HEK293 (cell line): ENCODE measurements at regions of chr1 and their contacts with region 1.

Region 1: DNA sequence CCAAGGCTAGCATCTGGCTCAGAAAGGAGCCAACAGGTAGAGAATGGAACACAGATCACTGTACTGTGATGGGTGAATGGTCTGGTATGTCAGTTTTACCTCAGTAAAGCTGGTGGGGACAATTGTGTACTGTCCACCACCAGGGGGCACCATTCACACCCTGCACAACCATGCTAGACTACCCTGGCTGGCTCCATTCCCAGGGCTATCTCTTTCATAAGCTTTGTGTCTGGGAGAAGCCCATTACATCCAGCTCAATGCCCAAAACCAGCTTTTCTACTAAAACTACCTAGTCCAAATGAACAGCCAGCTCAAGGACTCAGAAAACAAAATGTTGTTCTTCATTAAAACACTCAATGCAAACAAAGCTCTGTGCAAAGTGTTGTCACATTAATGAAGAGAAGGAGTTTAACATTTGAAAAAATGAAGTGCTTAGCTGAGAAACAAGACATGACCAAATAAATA is 62.0 kb upstream of the RASAL2 start:
- H3K4me3 ChIP-seq: no peak overlapping the region
- H3K27ac ChIP-seq: no peak overlapping the region
- H3K4me1 ChIP-seq: no peaks in the 10 kb centered on the region
- CTCF ChIP-seq: 0 out of 2 replicates have a peak, but pooled peaks have one; percentile 35

Region 2: GRCh38 chr1:177858332-177858821 is 173.5 kb before region 1 on chr1:
- CTCF ChIA-PET with region 1: no interaction called
- POLR2A ChIA-PET with region 1: no interaction called
- H3K4me3 ChIP-seq: no peak overlapping the region
- H3K27ac ChIP-seq: no peak overlapping the region
- H3K4me1 ChIP-seq: no peaks in the 10 kb centered on the region
- CTCF ChIP-seq: no peak

Region 3: DNA sequence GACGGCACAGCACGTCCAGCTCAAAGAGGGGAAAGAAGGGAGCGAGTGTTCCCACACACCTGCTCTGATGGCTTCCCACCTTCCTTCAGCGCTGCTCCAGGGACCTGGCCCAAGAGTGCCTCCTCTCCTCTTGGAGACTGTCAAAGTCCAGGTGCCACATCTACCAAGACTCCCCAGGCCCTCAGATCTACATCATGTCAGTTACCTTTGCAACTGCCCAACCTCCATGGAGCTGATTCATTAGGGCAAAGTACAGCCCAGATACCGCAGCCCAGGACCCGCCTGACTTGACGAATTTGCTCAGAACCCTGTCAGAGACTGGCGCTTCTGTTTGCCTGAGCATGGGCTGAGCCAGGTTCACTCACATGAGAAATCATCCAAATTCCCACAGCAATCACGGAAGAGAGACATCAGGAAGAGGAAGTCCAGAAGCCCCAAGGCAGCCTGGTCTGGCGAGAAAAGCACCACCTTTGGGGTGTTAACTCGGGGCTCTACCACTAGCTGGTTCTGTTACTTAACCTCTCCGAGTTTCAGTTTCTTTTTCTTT is 62.0 kb before region 1 on chr1 and contains the start of gene SEC16B:
- CTCF ChIA-PET with region 1: no interaction called
- POLR2A ChIA-PET with region 1: no interaction called
- H3K4me3 ChIP-seq: no peak within 1 kb of the TSS
- H3K27ac ChIP-seq: no peak within 1 kb of the TSS
- H3K4me1 ChIP-seq: no peaks in the 10 kb centered on the region
- CTCF ChIP-seq: no peak

Region 4: DNA sequence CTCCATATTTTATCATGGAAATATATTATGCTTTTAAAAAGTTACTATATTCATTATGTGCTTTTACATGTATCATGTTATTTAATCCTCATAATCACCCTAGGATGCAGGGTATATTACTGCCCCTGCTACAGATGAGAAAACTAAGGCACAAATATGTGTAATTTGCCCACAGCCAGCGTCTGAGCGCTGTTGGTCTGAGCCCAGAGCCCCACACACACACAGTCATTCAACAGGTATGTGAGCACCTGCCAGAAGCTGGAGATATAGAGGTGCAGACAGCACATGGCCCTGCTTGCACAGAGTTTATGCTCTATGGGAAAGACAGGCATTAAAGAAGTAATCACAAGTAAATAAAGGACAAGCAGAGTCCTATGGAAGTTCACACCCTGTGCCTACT is 12.3 kb before region 1 on chr1:
- CTCF ChIA-PET with region 1: interaction called, 12 read pairs
- POLR2A ChIA-PET with region 1: no interaction called
- H3K4me3 ChIP-seq: no peak overlapping the region
- H3K27ac ChIP-seq: no peak overlapping the region
- H3K4me1 ChIP-seq: no peaks in the 10 kb centered on the region
- CTCF ChIP-seq: no peak

Region 5: GRCh38 chr1:178052650-178053461 is 21.0 kb after region 1 on chr1:
- CTCF ChIA-PET with region 1: interaction called, 26 read pairs
- POLR2A ChIA-PET with region 1: interaction called, 4 read pairs
- H3K4me3 ChIP-seq: no peak overlapping the region
- H3K27ac ChIP-seq: no peak overlapping the region; the same call in 1 of the 2 replicates
- H3K4me1 ChIP-seq: no peaks in the 10 kb centered on the region
- CTCF ChIP-seq: no peak

Region 6: DNA sequence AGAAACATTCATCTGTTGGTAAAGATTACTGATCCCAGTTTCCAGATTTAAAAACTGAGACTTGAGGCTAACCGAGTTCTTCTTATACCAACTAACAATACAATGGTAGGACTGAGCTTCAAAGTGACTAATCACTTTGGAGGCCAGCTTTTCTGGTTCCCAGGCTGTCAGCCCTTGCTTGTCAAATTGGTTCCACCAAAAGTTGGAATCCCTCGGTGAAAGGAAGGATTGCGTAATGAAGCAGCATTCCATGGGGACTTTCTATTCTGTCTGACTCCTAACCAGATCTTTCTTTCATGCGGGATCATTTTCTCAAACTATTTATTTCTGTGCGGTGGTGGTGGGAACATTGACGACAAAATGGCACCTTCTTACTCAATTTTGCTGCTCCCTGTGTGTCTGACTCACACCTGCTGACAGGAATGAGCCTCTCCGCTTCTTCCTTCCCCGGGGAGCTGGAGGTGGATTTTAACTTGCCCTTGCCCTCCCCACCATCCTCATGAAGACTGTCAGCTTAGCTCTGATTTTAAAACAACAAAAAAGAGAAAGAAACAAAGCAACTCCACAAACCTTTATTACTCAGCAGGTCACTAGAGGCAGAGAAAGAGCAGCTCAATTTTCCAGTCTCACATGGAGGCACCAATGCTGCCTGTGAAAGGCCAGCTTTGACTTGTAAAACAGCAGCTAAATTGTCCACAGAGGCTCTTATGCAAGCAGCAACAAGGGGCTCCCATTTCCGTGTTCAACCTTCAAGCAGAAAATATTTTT is 29.1 kb after region 1 on chr1:
- CTCF ChIA-PET with region 1: interaction called, 12 read pairs
- POLR2A ChIA-PET with region 1: interaction called, 4 read pairs
- H3K4me3 ChIP-seq: no peak overlapping the region
- H3K27ac ChIP-seq: no peak overlapping the region
- H3K4me1 ChIP-seq: no peaks in the 10 kb centered on the region
- CTCF ChIP-seq: no peak

Region 7: DNA sequence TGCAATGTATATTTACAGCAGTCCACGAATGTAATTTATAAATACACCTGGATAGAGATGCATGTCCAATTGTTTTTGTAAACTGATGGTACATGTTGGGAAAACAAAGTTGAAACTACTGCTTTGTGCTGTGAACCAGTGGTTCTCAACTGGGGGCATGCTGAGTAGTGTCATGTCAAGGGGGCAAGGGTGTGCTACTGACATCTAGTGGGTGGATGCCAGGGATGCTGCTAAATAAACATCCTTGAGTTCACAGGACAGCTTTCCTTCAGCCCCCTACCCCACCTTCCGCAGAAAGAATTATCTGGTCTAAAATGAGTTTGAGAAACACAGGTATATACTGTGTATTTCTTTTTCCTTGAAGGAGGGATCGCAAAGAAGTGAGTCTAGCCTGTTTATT is 157.9 kb after region 1 on chr1:
- CTCF ChIA-PET with region 1: interaction called, 69 read pairs
- POLR2A ChIA-PET with region 1: no interaction called
- H3K4me3 ChIP-seq: no peak overlapping the region
- H3K27ac ChIP-seq: no peak overlapping the region
- H3K4me1 ChIP-seq: peaks cover 3% of the 10 kb centered on the region; the same call in 1 of the 2 replicates
- CTCF ChIP-seq: no peak

Region 8: DNA sequence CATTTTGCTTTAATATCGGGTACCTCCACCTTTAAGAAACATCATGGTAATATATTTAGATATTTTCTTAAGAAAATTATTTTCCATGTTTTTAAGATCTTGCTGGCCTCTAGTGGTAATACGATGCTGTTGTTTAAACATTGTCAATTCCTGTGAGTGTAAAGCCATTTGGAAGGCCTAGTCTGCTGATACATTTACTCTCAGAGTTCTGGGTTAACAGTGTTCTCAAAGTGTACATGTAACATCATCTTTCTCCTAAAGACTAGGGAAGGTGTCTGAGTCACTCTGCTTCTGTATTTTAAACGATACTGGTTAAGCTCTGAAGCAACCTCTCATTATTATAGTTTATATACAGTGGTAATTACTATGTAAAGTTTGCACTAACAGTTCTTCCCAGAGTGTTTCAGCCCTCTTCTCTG is 251.1 kb after region 1 on chr1:
- CTCF ChIA-PET with region 1: interaction called, 18 read pairs
- POLR2A ChIA-PET with region 1: no interaction called
- H3K4me3 ChIP-seq: no peak overlapping the region
- H3K27ac ChIP-seq: no peak overlapping the region
- H3K4me1 ChIP-seq: no peaks in the 10 kb centered on the region
- CTCF ChIP-seq: no peak

Region 9: DNA sequence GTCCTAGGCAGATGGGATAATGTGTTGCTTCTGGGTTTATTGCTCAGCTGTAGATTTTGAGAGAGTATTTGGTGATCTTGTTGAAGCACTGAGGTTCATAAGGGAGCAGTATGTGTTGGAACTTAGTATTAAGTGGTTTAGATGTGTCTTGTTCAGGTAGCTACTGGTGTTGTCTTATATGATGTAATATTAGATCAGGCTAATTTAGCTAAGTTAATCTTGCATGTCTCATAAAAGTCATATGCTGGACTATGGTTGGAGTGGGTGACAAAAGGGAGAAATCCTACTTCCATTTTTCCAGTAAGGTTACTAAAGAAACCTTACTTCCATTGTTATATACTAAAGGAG is 268.4 kb after region 1 on chr1:
- CTCF ChIA-PET with region 1: interaction called, 20 read pairs
- POLR2A ChIA-PET with region 1: no interaction called
- H3K4me3 ChIP-seq: no peak overlapping the region
- H3K27ac ChIP-seq: no peak overlapping the region
- H3K4me1 ChIP-seq: peaks cover 3% of the 10 kb centered on the region; the same call in 1 of the 2 replicates
- CTCF ChIP-seq: no peak